ENCODE measurements at regions of chr3 and their contacts with region 1.

Region 1: DNA sequence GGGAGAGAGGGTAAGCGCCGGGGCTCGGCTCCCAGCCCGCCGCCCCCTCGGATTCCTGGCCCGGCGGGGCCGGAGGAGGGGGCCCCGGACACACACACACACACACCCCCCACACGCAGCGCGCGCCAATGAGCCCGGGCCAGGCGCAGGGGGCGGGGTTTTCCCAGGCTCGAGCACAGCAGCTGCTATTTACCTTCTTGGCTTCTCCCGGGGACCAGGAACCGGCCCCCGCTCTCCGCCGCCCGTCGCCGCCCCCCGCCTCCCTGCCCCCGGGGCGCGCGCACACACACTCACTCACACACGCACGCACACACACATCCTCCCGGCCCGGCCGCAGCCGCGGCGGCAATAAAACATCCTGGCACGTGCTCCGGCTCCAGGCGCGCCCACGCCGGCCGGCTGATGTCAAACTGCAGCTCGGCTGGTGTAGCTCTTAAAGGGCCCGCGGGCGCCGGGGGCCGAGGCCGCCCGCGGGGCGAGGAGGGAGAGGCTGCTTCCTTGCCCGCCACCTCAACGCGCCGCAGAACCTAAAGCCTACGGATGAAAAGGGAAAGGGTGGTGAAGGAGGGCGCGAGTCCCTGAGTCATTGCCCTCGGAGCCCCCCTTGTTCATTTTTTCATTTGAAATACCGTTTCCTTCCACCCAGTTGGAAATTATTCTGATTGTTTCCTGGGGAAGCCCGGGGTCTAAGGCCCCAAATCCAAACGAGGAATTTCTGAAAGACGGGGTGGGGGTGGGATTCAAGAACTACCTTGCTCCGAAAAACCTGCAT is 1.0 kb upstream of the HES1 start:
- DNase-seq: peak; percentile 88
- ATAC-seq: peak; percentile 61
- H3K4me3 ChIP-seq: peak overlapping the region; percentile 49 to 59
- H3K27ac ChIP-seq: peak overlapping the region; percentile 60
- H3K4me1 ChIP-seq: peaks cover 47 to 78% of the 10 kb centered on the region in 2 experiments
- H3K27me3 ChIP-seq: peaks cover 14% of the 10 kb centered on the region; the same call in 1 of the 2 replicates
- CTCF ChIP-seq: no peak
- POLR2A ChIP-seq: no peak
- RAD21 ChIP-seq: no peak

Region 2: GRCh38 chr3:193605876-193606275 is 529.1 kb before region 1 on chr3:
- CTCF ChIA-PET with region 1: no interaction called
- POLR2A ChIA-PET with region 1: no interaction called
- RAD21 ChIA-PET with region 1: no interaction called
- intact Hi-C with region 1: loop called (anchors 10 kb)
- DNase-seq: peak; percentile 56
- ATAC-seq: peak; percentile 99
- H3K4me3 ChIP-seq: no peak overlapping the region
- H3K27ac ChIP-seq: no peak overlapping the region
- H3K4me1 ChIP-seq: no peaks in the 10 kb centered on the region
- H3K27me3 ChIP-seq: no peaks in the 10 kb centered on the region
- CTCF ChIP-seq: peak; percentile 32 to 87 (median 82); a peak in 5 of 6 replicates
- POLR2A ChIP-seq: no peak
- RAD21 ChIP-seq: no peak; the same call in 1 of the 2 replicates

Region 3: GRCh38 chr3:193788189-193788991 is 346.6 kb before region 1 on chr3:
- CTCF ChIA-PET with region 1: interaction called, 46 read pairs
- POLR2A ChIA-PET with region 1: interaction called, 4 read pairs
- RAD21 ChIA-PET with region 1: no interaction called
- intact Hi-C with region 1: loop called (anchors 1 kb)
- DNase-seq: peak; percentile 51
- ATAC-seq: peak; percentile 93
- H3K4me3 ChIP-seq: no peak overlapping the region
- H3K27ac ChIP-seq: no peak overlapping the region
- H3K4me1 ChIP-seq: peaks cover 7 to 38% of the 10 kb centered on the region in 2 experiments
- H3K27me3 ChIP-seq: peaks cover 18% of the 10 kb centered on the region; the same call in 1 of the 2 replicates
- CTCF ChIP-seq: peak; percentile 67 to 93 (median 90); a peak in 5 of 6 replicates
- POLR2A ChIP-seq: no peak
- RAD21 ChIP-seq: peak; percentile 99

Region 4: DNA sequence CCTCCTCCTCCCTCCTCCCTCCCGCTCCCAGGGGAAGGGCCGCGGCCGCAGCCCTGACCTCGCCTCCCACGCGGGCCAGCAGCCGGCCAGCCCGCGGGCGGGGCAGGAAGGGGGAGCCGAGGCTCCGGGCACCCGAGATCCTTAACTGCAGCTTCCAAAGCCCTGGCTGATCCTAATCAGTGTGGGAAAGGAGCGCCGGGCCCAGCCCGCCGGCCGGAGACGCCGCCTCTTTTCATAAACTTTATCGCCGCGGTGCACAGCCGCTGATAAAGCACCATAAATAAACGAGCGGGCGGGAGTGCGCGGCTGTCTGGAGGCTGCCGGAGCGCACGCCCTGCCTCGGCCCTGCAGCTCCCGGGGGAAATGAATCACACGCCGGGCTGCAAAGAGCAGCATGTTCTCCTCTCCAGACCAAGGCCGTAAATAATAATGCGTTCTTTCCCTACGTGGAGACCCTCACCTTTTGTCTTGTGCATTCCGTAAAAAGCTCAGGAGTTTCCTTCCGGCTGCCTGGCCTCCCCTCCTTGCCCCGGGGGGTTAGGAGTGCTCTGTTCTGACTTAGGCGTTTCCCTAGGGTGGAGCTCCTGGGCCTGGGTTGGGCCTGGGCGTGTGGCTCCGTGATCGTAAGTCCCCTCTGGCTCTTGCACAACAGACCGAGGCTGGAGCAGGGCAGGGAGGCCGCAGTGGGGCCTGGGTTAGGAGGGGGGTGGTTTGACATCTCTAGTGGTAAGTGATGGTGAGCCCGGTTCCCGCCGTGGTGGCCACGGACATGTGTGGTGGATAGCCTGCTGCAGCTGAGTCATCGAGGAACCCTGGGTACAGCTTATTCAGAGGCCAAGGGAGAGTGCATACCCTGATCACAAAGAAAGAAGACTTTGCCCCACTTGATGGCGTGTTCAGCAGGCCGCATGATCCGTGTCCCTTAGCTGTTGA is 131.6 kb before region 1 on chr3:
- CTCF ChIA-PET with region 1: no interaction called
- POLR2A ChIA-PET with region 1: interaction called, 7 read pairs
- RAD21 ChIA-PET with region 1: interaction called, 3 to 5 read pairs
- intact Hi-C with region 1: loop called (anchors 2 kb)
- DNase-seq: peak; percentile 71
- ATAC-seq: peak; percentile 87
- H3K4me3 ChIP-seq: peak overlapping the region; percentile 42 to 60
- H3K27ac ChIP-seq: peak overlapping the region; percentile 50
- H3K4me1 ChIP-seq: peaks cover 20 to 39% of the 10 kb centered on the region in 2 experiments
- H3K27me3 ChIP-seq: no peaks in the 10 kb centered on the region; the same call in 1 of the 2 replicates
- CTCF ChIP-seq: no peak
- POLR2A ChIP-seq: peak; percentile 80
- RAD21 ChIP-seq: peak; percentile 29; the same call in 1 of the 2 replicates

Region 5: DNA sequence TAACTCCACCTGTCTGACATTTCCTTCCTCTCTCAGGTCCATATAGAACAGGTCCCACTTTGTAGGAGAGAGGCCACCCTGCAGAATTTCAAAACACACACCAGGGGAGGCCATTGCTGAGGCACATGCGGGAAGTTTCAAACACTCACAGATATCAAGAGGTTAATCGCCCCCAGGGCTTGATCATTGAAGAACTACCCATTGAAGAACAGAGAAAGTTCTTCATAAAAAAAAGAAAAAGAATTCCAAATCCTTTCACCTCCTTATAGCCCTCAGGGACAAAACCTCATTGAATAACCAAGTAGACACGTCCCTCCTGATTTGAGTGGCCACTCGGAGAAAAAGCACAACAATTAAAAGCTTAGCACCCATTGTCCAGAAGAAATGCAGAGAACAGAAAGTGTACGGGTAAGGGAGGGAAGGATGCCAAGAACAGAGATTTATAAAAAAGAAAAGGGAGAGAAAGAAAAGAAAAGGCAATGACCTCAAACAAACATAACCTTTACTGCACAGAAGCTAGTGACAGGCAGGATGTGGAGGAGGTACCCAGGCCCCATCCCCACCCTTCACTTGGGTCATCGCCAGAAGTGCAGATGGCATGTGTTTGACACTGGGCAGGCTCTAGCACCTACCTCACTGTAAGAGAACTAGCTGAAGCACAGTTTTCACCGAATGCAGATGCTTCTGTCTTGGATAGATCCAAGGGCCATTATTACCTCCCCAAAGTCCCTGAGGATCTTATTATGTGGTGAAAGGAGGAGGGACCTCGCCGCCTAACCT is 111.3 kb before region 1 on chr3:
- CTCF ChIA-PET with region 1: no interaction called
- POLR2A ChIA-PET with region 1: no interaction called
- RAD21 ChIA-PET with region 1: no interaction called
- intact Hi-C with region 1: no loop called
- DNase-seq: no peak
- ATAC-seq: no peak
- H3K4me3 ChIP-seq: no peak overlapping the region
- H3K27ac ChIP-seq: no peak overlapping the region
- H3K4me1 ChIP-seq: peaks cover 0 to 7% of the 10 kb centered on the region in 2 experiments; a peak in 2 of 4 replicates
- H3K27me3 ChIP-seq: peaks cover 5% of the 10 kb centered on the region; the same call in 1 of the 2 replicates
- CTCF ChIP-seq: no peak
- POLR2A ChIP-seq: no peak
- RAD21 ChIP-seq: no peak

Region 6: DNA sequence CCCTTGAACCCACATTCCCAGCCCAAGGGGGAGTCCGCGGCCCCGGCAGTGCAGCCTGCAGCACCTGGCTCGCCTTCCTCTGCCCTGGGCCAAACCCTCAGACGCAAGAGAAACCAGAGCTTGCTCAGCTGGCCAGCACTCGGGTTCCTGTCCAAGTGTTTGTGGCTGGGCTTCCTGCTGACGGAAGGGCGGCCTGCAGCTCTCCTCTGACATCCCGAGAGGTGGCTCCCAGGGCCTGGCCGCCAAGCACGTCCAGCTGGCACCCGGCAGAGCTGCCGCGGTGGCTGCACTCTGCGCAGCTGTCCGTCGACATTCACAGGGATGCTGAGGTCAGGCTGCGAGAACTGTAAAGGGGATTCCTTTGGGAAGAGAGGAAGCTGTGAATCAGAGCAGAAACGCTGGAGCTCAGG is 130.5 kb after region 1 on chr3:
- CTCF ChIA-PET with region 1: no interaction called
- POLR2A ChIA-PET with region 1: interaction called, 11 read pairs
- RAD21 ChIA-PET with region 1: no interaction called
- intact Hi-C with region 1: loop called (anchors 5 kb)
- DNase-seq: no peak
- ATAC-seq: no peak
- H3K4me3 ChIP-seq: no peak overlapping the region
- H3K27ac ChIP-seq: no peak overlapping the region
- H3K4me1 ChIP-seq: peaks cover 28 to 34% of the 10 kb centered on the region in 2 experiments
- H3K27me3 ChIP-seq: no peaks in the 10 kb centered on the region
- CTCF ChIP-seq: no peak
- POLR2A ChIP-seq: no peak
- RAD21 ChIP-seq: no peak